ENCODE measurements at regions of chr17 and their contacts with region 1.

Region 1: GRCh38 chr17:74212913-74213791 is at the start of gene TTYH2:
- DNase-seq: peak; percentile 87 to 90
- ATAC-seq: peak; percentile 65 to 70
- H3K4me3 ChIP-seq: peak within 1 kb of the TSS; percentile 63 to 89 (median 69)
- H3K27ac ChIP-seq: peak within 1 kb of the TSS; percentile 88 to 96 (median 94)
- H3K4me1 ChIP-seq: peaks cover 68% of the 10 kb centered on the region in 2 donors
- H3K27me3 ChIP-seq: no peaks in the 10 kb centered on the region
- CTCF ChIP-seq: peak; percentile 27 to 49 (median 30)
- POLR2A ChIP-seq: peak; percentile 73 to 75
- total RNA-seq, gene TTYH2: 4.7 to 19.2 (median 11.4) TPM

Region 2: DNA sequence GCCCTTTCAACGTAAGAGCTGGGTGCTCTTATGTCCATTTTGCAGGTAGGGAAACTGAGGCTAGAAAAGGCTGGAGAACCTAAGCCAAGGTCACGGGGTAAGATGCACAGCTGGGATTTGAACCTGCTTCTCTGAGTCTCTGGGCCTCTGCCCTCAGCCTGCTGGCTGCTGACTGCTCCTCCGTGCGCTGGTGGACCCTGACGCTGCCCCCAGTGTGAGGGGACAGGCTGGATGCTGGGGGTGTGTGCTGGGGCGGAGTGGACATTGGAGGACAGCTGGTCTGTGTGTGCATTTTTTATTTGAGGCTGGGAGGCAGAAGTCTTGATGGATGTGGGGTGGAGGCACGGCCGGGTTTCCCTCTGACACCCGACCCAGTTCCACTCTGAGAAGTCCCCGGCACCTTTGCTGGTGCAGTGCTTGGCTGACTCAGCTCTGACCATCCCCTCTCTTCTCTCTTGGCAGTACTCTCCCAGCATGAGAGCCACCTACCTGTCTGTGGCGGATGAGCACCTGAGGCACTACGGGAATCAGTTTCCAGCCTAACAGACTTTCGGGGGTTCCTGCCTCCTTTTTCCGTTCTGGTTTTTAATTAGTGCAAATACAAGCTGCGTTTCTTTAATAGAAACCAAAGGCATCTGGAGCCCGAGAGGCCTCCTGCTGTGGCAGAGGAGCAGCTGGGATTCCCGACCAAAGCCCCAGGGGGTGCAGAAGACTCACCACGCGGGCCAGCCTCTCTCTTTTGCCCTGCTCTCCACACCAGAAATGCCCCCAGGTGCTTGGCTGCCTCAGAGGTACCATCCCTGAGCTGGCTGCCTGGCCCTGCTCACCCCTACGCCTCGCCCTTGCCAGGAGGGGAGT is 46.7 kb after region 1 on chr17:
- in situ Hi-C with region 1: no loop called
- intact Hi-C with region 1: no loop called
- DNase-seq: no peak
- ATAC-seq: no peak
- H3K4me3 ChIP-seq: no peak overlapping the region
- H3K27ac ChIP-seq: no peak overlapping the region
- H3K4me1 ChIP-seq: no peaks in the 10 kb centered on the region
- H3K27me3 ChIP-seq: no peaks in the 10 kb centered on the region
- CTCF ChIP-seq: no peak
- POLR2A ChIP-seq: no peak

Region 3: GRCh38 chr17:74296548-74296936 is 83.4 kb after region 1 on chr17:
- in situ Hi-C with region 1: loop called in 1 of 4 experiments (anchors 5 kb)
- intact Hi-C with region 1: loop called (anchors 2 kb)
- DNase-seq: peak; percentile 16 to 41
- ATAC-seq: peak; percentile 78 to 79
- H3K4me3 ChIP-seq: no peak overlapping the region
- H3K27ac ChIP-seq: no peak overlapping the region
- H3K4me1 ChIP-seq: no peaks in the 10 kb centered on the region
- H3K27me3 ChIP-seq: no peaks in the 10 kb centered on the region
- CTCF ChIP-seq: peak; percentile 11 to 53 (median 27)
- POLR2A ChIP-seq: no peak

Region 4: DNA sequence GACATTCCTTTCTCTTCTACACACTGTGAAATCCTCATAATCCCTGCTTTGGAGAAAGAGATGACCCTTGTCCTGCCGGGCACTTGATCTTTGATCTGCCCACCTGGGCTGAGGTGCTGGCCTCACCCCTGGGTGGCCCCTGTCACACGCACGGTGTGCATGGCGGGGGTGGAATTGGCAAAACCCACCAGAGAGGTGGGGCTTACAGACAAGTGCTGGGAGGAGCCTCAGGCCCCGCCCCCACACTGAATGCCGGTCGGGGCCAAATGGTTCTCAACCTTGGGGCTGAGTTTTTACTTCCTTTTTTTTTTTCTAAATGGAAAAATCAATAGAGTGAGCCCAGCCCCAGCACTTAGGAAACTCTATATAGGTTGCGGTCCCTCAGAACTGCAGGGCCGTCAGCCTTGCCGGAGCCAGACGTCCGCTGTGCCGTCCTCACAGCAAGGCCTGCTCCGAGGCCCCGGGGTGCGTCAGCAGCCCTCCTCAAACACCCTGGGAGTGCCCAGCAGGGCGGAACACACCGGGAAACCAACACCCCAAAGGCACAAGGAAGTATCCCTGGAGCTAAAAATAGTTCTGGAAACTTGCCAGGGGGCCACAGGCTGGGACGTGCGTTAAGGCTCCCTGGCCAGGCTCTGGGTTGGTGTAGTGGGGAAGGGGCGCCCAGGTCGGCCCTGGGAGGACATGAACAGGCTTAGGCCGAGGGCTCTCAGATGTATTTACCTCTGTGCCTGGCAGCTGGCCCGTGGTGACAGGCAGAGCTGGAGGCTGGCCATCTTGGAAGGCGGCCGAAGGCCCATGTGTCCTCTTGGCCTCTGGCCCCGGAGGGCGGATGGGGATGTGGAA is 229.7 kb after region 1 on chr17:
- in situ Hi-C with region 1: no loop called
- intact Hi-C with region 1: loop called (anchors 5 kb)
- DNase-seq: peak; percentile 79 to 93
- ATAC-seq: peak; percentile 51 to 52
- H3K4me3 ChIP-seq: peak overlapping the region; percentile 39 to 57 (median 50)
- H3K27ac ChIP-seq: peak overlapping the region; percentile 92 to 98 (median 97)
- H3K4me1 ChIP-seq: peaks cover 52 to 59% of the 10 kb centered on the region in 2 donors
- H3K27me3 ChIP-seq: no peaks in the 10 kb centered on the region
- CTCF ChIP-seq: no peak
- POLR2A ChIP-seq: peak; percentile 77 to 81

Region 5: GRCh38 chr17:74513987-74514631 is 301.0 kb after region 1 on chr17:
- in situ Hi-C with region 1: no loop called
- intact Hi-C with region 1: loop called (anchors 10 kb)
- DNase-seq: peak in 1 of 2 donors; percentile 28
- ATAC-seq: peak; percentile 5 to 22
- H3K4me3 ChIP-seq: no peak overlapping the region
- H3K27ac ChIP-seq: peak overlapping the region in 1 of 4 donors; percentile 80
- H3K4me1 ChIP-seq: peaks cover 13 to 19% of the 10 kb centered on the region in 2 donors
- H3K27me3 ChIP-seq: no peaks in the 10 kb centered on the region
- CTCF ChIP-seq: peak in 2 of 5 experiments; percentile 34
- POLR2A ChIP-seq: no peak

Region 6: DNA sequence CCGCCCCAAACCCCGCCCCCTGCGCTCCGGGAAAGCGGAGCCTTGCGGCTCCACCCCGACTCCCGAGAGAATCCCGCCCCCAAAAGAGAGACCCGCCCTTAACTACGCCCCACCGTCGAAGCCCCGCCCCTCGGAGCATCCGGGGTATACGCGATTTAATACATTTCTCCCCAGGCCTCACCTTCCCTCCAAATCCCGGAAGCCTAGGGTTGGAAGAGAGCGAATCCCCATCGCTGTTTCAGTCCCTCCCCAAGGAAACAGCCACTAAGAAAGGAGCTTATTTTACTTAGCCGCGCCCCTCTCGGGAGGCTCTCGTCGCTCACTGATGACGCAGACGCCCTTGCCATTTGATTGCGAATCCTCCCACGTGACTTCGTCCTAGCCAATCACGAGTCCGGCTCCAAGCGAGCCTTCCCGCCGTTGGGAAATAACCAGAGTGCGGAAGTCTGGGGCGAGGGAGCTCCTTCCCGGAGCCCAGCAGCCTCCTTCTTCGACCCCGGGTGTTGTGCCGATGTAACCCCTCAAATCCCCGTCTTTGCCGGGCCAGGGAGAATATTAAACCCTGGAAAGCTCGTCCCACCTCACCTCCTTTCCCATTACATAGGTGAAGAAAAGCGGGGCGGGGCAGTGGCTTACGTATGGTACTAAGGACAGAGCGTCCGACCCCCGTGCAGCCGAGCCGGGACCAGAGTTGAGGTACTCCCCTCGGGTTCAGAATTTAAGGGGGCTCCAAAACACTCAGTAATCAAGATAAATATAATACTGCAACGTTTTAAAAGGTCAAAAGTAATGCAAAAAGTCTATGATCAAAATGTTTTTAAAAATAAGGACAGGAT is 660.1 kb after region 1 on chr17:
- in situ Hi-C with region 1: no loop called
- intact Hi-C with region 1: loop called (anchors 5 kb)
- DNase-seq: peak; percentile 99 to 100
- ATAC-seq: peak; percentile 97 to 99
- H3K4me3 ChIP-seq: peak overlapping the region; percentile 71 to 83 (median 76)
- H3K27ac ChIP-seq: peak overlapping the region; percentile 86 to 95 (median 93)
- H3K4me1 ChIP-seq: peaks cover 14% of the 10 kb centered on the region in 2 donors
- H3K27me3 ChIP-seq: no peaks in the 10 kb centered on the region
- CTCF ChIP-seq: peak in 1 of 5 experiments; percentile 31
- POLR2A ChIP-seq: peak; percentile 77 to 97

Measured in gastrocnemius medialis (tissue), 4 donors.